IMR-90 (cell line): ENCODE measurements at regions of chr4 and their contacts with region 1.

Region 1: DNA sequence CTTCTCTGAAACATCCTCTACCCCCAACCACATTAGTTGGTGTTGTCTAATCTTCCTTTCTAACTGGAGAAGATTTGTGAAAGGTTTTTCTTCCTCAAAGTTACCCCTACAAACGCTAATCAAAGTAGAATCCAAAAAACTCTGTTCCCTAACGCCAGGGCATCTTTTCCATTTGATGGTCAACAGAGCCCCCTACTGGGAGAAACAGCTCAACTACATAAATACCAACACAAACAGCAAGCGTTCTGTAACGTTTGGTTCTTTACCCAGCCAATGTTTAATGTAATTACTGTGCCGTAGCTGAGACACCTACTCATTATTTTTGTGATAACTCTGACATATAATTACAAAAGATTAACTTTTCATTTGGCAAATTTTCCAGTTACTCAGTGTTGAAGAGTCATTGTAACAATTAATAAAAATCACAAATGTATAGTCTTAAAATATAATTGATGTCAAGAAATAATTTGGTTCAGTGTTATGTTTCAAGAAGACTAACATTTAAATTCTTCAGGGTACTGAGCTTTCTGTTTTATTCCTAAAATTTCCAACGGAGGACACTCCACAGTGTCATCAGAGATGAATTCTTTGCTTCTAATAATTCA is 94.9 kb upstream of the TBC1D9 start:
- DNase-seq: peak; percentile 65
- ATAC-seq: peak; percentile 84
- H3K4me3 ChIP-seq: no peak overlapping the region
- H3K27ac ChIP-seq: no peak overlapping the region
- H3K4me1 ChIP-seq: no peaks in the 10 kb centered on the region
- H3K27me3 ChIP-seq: peaks cover 12% of the 10 kb centered on the region
- CTCF ChIP-seq: peak; percentile 89
- POLR2A ChIP-seq: no peak
- RAD21 ChIP-seq: peak; percentile 95

Region 2: DNA sequence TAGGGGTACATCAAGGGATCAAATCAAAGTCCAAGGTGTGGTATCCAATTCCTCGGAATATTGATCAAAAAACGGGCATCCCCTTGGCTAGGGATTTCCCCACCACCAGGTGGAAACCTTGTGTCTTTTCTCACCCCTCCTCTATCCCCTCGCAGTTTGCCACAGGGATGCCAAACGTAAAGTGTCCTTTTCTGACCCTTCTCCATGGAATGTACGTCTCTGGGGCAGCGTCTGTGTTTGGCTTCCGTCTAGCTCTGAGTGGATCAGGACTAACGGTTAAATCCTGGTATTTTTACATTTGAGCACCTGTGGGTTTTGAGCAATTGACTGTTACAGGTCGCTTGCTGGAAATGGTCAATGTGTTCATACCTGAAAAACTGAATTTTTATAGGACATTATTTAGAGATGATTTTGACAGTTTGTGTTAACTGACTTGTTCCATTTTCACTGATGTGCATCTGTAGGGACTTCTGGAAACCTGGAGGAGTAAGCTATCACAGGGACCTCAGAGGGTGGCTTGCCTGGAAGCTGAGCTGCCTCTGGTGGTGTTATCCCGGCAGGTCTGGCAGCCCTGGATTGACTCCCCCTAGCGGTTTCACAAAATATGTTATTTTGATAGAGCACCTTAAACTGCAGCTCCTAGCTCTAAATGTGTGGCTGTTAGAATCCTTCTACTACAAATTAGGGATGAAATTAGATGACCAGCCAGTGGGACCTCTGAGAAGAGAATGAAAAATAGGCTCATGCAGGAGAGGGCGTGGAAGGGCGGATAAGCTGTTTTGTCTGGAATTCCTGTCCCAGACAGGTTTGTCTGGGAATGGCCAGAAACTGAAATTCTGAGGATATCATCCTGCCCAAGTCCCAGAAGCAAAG is 1194.3 kb before region 1 on chr4:
- CTCF ChIA-PET with region 1: no interaction called
- POLR2A ChIA-PET with region 1: no interaction called
- dilution Hi-C with region 1: no loop called
- in situ Hi-C with region 1: no loop called
- intact Hi-C with region 1: loop called (anchors 5 kb)
- DNase-seq: peak; percentile 78
- ATAC-seq: peak; percentile 92
- H3K4me3 ChIP-seq: no peak overlapping the region
- H3K27ac ChIP-seq: peak overlapping the region; percentile 18; the same call in 1 of the 2 replicates
- H3K4me1 ChIP-seq: peaks cover 6% of the 10 kb centered on the region
- H3K27me3 ChIP-seq: no peaks in the 10 kb centered on the region
- CTCF ChIP-seq: peak; percentile 93
- POLR2A ChIP-seq: no peak
- RAD21 ChIP-seq: peak; percentile 52

Region 3: GRCh38 chr4:140359562-140360427 is 491.3 kb before region 1 on chr4:
- CTCF ChIA-PET with region 1: interaction called, 4 read pairs
- POLR2A ChIA-PET with region 1: no interaction called
- dilution Hi-C with region 1: no loop called
- in situ Hi-C with region 1: loop called (anchors 25 kb)
- intact Hi-C with region 1: loop called (anchors 1 kb)
- DNase-seq: peak; percentile 81
- ATAC-seq: peak; percentile 89
- H3K4me3 ChIP-seq: no peak overlapping the region
- H3K27ac ChIP-seq: no peak overlapping the region
- H3K4me1 ChIP-seq: no peaks in the 10 kb centered on the region; the same call in 1 of the 2 replicates
- H3K27me3 ChIP-seq: peaks cover 12% of the 10 kb centered on the region
- CTCF ChIP-seq: peak; percentile 64
- POLR2A ChIP-seq: no peak
- RAD21 ChIP-seq: peak; percentile 61

Region 4: GRCh38 chr4:140523857-140524742 is 327.0 kb before region 1 on chr4 and contains the start of gene ELMOD2:
- CTCF ChIA-PET with region 1: no interaction called
- POLR2A ChIA-PET with region 1: no interaction called
- dilution Hi-C with region 1: no loop called
- in situ Hi-C with region 1: no loop called
- intact Hi-C with region 1: loop called (anchors 1 kb)
- DNase-seq: peak; percentile 95
- ATAC-seq: peak; percentile 100
- H3K4me3 ChIP-seq: peak within 1 kb of the TSS; percentile 85
- H3K27ac ChIP-seq: peak within 1 kb of the TSS; percentile 76
- H3K4me1 ChIP-seq: no peaks in the 10 kb centered on the region
- H3K27me3 ChIP-seq: no peaks in the 10 kb centered on the region
- CTCF ChIP-seq: peak; percentile 93
- POLR2A ChIP-seq: peak; percentile 73
- RAD21 ChIP-seq: peak; percentile 41
- total RNA-seq, gene ELMOD2: 10.6 and 30.0 TPM in 2 replicates

Region 5: DNA sequence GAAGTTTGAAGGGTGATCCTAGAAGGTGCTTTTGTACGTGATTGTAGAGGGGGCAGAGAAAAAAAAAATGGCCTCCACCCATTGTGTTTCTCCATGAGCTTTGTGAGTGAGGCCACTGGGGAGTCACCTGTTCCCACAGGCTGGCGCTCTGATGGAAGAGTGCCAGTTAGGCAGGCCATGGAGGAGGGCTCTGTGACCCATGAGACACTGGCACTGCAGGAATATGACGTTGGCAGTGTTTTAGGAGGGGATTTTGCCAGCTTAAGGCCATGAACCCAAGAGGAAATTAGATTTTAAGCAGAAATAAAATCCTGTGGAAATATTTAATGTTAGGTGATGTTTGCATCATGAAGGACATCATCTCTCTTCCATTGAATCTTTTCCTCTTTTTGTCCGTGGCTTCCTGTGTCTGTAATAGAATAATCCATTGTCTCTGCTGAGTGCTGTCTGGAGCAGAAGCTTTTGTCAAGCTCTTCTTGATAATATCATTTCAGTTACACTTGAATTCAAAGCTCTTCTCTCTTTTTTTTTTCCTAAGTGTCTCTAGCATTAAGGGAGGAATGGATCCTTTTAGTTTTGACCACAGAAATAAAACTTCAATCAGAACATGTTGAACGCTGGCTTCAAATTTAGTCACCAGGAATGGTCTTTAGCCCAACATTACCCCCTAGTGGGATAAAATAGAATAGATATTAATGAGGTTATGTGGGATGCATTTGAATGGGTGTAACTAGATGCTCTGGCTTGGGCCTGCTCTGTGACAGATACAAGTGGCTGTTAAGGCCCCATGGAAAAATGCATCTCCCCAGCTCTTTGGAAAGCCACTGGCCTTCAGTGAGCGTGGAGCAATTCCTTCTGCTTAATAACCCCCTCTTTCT is 241.3 kb before region 1 on chr4:
- CTCF ChIA-PET with region 1: interaction called, 3 read pairs
- POLR2A ChIA-PET with region 1: no interaction called
- dilution Hi-C with region 1: no loop called
- in situ Hi-C with region 1: loop called (anchors 10 kb)
- intact Hi-C with region 1: loop called (anchors 2 kb)
- DNase-seq: peak; percentile 55
- ATAC-seq: peak; percentile 92
- H3K4me3 ChIP-seq: no peak overlapping the region
- H3K27ac ChIP-seq: no peak overlapping the region
- H3K4me1 ChIP-seq: no peaks in the 10 kb centered on the region
- H3K27me3 ChIP-seq: peaks cover 7% of the 10 kb centered on the region
- CTCF ChIP-seq: peak; percentile 67
- POLR2A ChIP-seq: no peak
- RAD21 ChIP-seq: peak; percentile 71

Region 6: GRCh38 chr4:140982613-140983340 is 131.6 kb after region 1 on chr4:
- CTCF ChIA-PET with region 1: no interaction called
- POLR2A ChIA-PET with region 1: no interaction called
- dilution Hi-C with region 1: no loop called
- in situ Hi-C with region 1: no loop called
- intact Hi-C with region 1: no loop called
- DNase-seq: peak; percentile 41
- ATAC-seq: peak; percentile 64
- H3K4me3 ChIP-seq: no peak overlapping the region
- H3K27ac ChIP-seq: no peak overlapping the region
- H3K4me1 ChIP-seq: no peaks in the 10 kb centered on the region; the same call in 1 of the 2 replicates
- H3K27me3 ChIP-seq: no peaks in the 10 kb centered on the region
- CTCF ChIP-seq: no peak
- POLR2A ChIP-seq: no peak
- RAD21 ChIP-seq: no peak